Calu3 (cell line): ENCODE measurements at regions of chr15 and their contacts with region 1.

Region 1: GRCh38 chr15:53837263-53837662 is 77.8 kb upstream of the WDR72 start:
- DNase-seq: peak; percentile 66
- H3K4me3 Mint-ChIP-seq: no peak overlapping the region
- H3K27ac Mint-ChIP-seq: peak overlapping the region; percentile 80
- H3K4me1 Mint-ChIP-seq: peaks cover 56% of the 10 kb centered on the region
- H3K27me3 Mint-ChIP-seq: no peaks in the 10 kb centered on the region
- CTCF ChIP-seq: no peak

Region 2: DNA sequence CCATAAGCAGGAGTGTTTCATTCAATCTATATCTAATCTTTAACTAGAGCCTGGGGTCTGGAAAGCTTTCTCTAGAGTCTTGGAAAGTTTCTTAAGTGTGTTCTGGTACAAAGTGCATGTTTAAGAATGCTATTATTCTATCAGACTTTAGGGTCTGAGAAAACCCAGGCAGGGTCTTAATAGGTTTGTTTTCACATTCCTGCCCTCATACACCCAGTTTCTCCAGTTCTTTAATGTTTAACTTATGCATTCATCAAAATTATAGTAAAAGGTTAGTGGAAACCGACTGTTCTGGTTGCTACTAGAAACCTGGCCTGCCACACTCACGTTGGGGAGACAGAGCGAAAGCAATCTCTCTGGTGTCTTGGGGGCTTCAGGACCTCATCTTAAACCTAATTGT is 25.1 kb after region 1 on chr15:
- CTCF ChIA-PET with region 1: interaction called, 3 read pairs
- intact Hi-C with region 1: loop called (anchors 2 kb)
- DNase-seq: peak; percentile 18
- H3K4me3 Mint-ChIP-seq: peak overlapping the region; percentile 41
- H3K27ac Mint-ChIP-seq: peak overlapping the region; percentile 77
- H3K4me1 Mint-ChIP-seq: peaks cover 37% of the 10 kb centered on the region
- H3K27me3 Mint-ChIP-seq: no peaks in the 10 kb centered on the region
- CTCF ChIP-seq: no peak

Region 3: GRCh38 chr15:53910236-53910849 is 73.1 kb after region 1 on chr15:
- CTCF ChIA-PET with region 1: no interaction called
- intact Hi-C with region 1: loop called (anchors 2 kb)
- DNase-seq: peak; percentile 56
- H3K4me3 Mint-ChIP-seq: peak overlapping the region; percentile 79
- H3K27ac Mint-ChIP-seq: peak overlapping the region; percentile 81
- H3K4me1 Mint-ChIP-seq: peaks cover 13% of the 10 kb centered on the region
- H3K27me3 Mint-ChIP-seq: no peaks in the 10 kb centered on the region
- CTCF ChIP-seq: no peak

Region 4: DNA sequence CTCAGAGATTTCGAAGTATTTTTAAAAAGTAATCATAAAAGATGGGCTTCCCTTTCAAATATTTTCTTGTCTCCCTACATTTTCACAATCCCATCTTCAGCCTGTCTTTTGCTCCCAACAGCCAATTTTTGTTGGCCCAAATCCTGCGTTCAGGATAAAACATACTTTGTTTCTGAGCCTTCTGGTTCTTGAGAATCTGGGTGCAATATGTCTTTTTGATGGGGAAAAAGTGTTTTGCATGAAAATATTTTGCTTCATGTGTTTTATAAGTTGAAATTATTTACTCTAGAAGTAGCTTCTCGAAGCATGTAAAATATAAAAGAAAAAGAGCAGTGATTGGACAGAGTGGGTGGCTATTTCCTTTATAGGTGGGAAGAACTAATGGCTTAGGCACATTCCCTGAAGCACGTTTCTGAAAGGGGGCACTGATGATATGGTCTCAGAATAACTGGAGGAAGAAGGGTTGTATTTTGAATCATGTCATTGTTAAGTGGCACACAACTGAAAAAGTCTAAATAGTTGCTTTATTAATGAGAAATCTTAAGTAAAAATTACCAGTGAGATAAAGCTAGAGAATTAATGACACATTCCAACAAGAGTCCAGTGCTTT is 144.9 kb after region 1 on chr15:
- CTCF ChIA-PET with region 1: no interaction called
- intact Hi-C with region 1: no loop called
- DNase-seq: no peak
- H3K4me3 Mint-ChIP-seq: no peak overlapping the region
- H3K27ac Mint-ChIP-seq: no peak overlapping the region
- H3K4me1 Mint-ChIP-seq: peaks cover 2% of the 10 kb centered on the region
- H3K27me3 Mint-ChIP-seq: no peaks in the 10 kb centered on the region
- CTCF ChIP-seq: no peak